Dorsolateral prefrontal cortex (tissue), 120 donors: ENCODE measurements at regions of chr1 and their contacts with region 1.

Region 1: DNA sequence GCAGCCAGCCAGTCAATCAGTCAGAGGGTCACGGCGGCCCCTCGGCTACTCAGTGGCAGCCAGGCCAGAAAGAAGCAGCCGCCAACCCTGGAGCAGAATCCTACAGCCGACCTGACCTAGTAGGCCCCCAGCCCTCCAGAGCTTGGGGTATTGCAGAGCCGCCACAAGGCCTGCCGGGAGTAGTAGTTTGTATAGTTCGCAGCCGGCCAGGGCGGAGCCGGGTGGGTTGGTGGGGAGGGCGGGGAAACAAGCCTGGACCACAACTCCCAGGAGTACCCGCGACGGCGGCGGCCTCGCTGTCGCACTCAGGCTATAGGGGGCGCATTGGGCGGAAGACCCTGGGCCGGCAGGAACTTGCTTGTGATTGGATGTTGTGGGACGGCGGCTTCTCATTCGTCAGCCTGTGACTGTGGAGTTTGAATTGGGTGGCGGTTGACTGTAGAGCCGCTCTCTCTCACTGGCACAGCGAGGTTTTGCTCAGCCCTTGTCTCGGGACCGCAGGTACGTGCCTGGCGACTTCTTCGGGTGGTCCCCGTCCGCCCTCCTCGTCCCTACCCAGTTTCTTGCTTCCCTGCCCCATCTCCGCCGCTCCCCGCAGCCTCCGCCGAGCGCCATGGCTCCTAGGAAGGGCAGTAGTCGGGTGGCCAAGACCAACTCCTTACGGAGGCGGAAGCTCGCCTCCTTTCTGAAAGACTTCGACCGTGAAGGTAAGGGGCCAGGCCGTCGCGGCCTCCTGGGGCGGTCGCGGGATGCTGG is at the start of gene CDCA8:
- DNase-seq: peak; percentile 94 to 99 (median 98)
- H3K4me3 ChIP-seq: peak within 1 kb of the TSS; percentile 60 to 100 (median 89)
- H3K27ac ChIP-seq: peak within 1 kb of the TSS in 49 of 59 donors; percentile 6 to 90 (median 67)
- H3K27me3 ChIP-seq: no peaks in the 10 kb centered on the region
- CTCF ChIP-seq: peak; percentile 72 to 93 (median 85)
- total RNA-seq, gene CDCA8: 0.30 to 1.9 (median 0.93) TPM

Region 2: DNA sequence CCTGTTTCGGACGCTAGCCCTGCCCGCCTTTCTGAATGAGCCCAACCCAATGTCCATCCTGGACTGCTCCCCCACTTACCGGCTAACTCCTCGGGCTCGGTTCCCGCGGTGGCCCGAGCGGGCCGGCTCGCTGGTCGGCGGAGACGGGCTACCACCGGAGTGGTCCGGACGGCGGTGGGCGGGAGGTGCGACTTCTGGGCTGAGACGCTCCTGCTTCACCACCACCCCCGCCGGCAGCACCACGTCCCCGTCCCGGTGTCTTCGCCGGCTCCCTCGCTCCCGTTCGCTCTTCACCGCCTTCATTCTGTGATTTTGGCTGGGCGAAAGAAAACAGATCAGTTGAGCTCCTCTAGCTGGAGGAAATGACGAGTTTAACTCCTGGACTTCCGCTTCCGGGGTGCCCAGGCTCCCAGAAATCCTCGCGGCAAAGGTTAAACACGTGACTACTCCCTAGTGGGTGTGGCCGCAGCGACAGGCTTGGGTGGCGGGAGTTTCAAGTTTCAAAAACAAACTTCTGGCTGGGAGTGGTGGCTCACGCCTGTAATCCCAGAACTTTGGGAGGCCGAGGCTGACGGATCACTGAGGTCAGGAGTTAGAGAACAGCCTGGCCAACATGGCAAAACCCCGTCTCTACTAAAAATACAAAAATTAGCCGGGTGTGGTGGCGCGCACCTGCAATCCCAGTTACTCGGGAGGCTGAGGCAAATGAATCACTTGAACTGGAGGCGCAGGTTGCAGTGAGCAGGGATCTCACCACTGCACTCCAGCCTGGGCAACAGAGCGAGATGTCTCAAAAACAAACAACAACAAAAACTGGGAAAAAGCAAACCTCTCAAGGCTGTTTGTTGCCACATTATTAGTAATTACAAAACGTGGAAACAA is 138.1 kb before region 1 on chr1 and contains the start of gene SNIP1:
- intact Hi-C with region 1: loop called (anchors 1 to 2 kb)
- DNase-seq: peak; percentile 91 to 99 (median 98)
- H3K4me3 ChIP-seq: peak within 1 kb of the TSS; percentile 70 to 100 (median 96)
- H3K27ac ChIP-seq: peak within 1 kb of the TSS in 52 of 59 donors; percentile 1 to 91 (median 76)
- H3K27me3 ChIP-seq: no peaks in the 10 kb centered on the region
- CTCF ChIP-seq: peak in 27 of 56 donors; percentile 14 to 57 (median 35)
- total RNA-seq, gene SNIP1: 8.4 to 24.4 (median 16.7) TPM

Region 3: DNA sequence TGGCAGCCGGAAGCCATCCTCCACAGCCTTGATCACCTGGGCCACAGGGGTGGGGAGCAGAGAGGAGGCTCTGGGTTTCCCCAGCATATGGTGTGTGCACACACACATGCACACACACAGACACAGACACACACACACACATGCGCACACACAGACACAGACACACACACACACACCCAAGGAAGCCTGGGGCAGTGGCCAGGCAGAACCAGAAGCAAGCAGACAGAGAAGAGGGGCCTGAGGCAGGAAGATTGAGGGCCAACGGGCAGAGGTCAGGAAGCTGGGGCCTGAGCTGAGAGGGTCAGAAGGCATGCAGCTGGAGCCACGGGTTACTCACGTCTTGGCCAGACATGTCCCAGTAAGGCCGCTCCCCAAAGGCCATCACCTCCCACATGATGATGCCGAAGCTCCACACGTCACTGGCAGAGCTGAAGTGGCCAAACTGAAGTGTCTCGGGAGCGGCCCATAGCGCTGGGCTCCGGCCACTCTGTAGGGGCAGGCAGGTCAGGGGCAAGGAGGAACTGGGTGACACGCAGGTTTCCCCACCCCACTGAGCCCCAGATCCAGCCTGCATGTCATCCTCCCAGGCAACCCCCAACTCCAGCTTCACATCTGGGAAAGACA is 27.4 kb after region 1 on chr1:
- intact Hi-C with region 1: loop called in 1 of 2 experiments (anchors 2 kb)
- DNase-seq: no peak
- H3K4me3 ChIP-seq: no peak overlapping the region
- H3K27ac ChIP-seq: no peak overlapping the region
- H3K27me3 ChIP-seq: no peaks in the 10 kb centered on the region
- CTCF ChIP-seq: no peak

Region 4: GRCh38 chr1:37795321-37796125 is 103.3 kb after region 1 on chr1:
- intact Hi-C with region 1: no loop called
- DNase-seq: peak in 3 of 10 donors; percentile 13 to 46 (median 24)
- H3K4me3 ChIP-seq: peak overlapping the region; percentile 39 to 79 (median 65)
- H3K27ac ChIP-seq: peak overlapping the region in 4 of 59 donors; percentile 14 to 57 (median 52)
- H3K27me3 ChIP-seq: no peaks in the 10 kb centered on the region
- CTCF ChIP-seq: no peak

Region 5: DNA sequence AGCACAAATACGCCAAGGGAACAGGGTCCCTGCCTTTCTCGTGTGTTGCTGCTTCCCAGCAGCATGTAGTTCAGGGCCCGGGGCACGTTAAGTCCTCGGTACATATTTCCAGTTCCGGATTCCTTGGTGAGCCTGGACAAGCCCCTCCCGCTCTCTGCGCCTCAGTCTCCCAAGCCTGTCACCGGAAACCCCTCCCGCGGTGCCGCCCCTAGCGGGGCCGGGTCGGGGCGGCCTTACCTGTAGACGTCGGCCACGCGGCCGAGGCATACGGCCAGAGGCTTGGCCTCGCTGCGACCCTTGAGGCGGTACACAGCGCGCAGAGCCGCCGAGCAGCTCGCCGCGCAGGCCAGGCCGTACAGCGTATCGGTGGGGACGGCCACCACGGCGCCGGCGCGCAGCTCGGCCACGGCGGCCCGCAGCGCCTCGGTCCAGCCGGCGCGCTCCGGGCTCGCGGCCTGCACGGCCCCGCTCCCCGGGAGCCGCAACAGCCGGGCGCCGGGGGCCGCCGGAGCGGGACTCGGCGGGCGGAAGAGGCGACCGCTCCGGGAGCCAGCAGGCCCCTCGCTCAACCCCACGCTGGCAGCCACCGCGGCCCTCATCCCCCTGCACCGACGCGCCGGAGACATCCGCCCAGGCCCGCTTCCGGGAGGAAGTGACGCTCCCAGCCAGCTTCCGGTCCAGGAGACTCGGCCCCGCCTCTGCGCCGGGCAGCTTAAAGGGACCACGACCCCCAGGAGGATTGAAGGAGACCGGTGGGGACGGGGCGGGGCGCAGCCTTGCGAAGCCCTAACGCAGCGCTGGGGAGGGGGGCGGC is 115.5 kb after region 1 on chr1 and contains the starts of genes C1orf122 and YRDC:
- intact Hi-C with region 1: loop called (anchors 2 kb)
- DNase-seq: peak; percentile 93 to 98 (median 96)
- H3K4me3 ChIP-seq: peak within 1 kb of the TSS; percentile 68 to 97 (median 90)
- H3K27ac ChIP-seq: peak within 1 kb of the TSS; percentile 61 to 100 (median 97)
- H3K27me3 ChIP-seq: no peaks in the 10 kb centered on the region
- CTCF ChIP-seq: peak in 4 of 56 donors; percentile 7 to 18 (median 16)
- total RNA-seq, gene C1orf122: 49.0 to 111 (median 68.1) TPM
- total RNA-seq, gene YRDC: 6.0 to 15.3 (median 10.2) TPM

Region 6: DNA sequence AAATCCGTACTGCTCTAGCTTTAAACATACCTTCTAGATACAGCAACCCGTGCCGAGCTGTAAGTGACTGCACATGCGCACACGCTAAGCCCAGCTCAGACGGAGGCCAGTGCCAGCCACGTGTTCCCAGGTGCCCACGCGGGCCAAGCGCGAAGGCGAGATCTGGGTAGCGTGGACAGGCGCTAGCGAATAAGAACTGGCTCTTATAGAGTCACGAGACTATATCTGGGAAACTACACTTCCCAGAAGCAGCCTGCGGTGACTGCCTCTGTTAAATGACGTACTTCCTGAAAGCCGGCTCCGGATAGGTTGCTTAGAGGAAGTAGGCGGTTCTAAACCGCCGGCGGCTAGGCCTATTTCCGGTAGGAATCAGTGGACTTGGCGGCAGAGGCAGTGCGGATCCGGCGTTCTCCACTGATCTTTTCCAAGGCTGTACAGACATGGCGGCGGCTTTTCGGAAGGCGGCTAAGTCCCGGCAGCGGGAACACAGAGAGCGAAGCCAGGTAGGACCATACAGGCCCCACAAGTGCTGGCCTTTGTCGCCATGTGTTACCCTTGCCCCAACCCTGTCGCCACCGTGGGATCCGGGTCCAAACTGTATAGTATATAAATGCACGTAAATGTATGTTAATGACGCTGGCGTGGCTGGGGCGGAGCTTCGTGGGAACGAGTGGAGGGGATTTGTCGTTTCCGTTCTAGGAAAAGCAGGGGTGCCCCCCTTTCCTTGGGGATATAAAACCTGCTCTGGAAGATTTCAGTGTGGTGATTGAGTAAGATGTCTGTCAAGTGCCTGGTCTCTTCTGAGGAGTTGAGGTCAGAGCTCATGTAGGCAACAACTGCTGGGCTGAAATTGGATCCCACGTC is 320.3 kb after region 1 on chr1 and contains the start of gene UTP11:
- intact Hi-C with region 1: loop called in 1 of 2 experiments (anchors 2 kb)
- DNase-seq: peak; percentile 79 to 97 (median 96)
- H3K4me3 ChIP-seq: peak within 1 kb of the TSS; percentile 56 to 99 (median 86)
- H3K27ac ChIP-seq: peak within 1 kb of the TSS; percentile 20 to 96 (median 84)
- H3K27me3 ChIP-seq: no peaks in the 10 kb centered on the region
- CTCF ChIP-seq: peak in 22 of 56 donors; percentile 3 to 56 (median 28)
- total RNA-seq, gene UTP11: 13.6 to 33.4 (median 24.4) TPM

Region 7: GRCh38 chr1:38037221-38037939 is 345.1 kb after region 1 on chr1:
- intact Hi-C with region 1: no loop called
- DNase-seq: no peak
- H3K4me3 ChIP-seq: no peak overlapping the region
- H3K27ac ChIP-seq: no peak overlapping the region
- H3K27me3 ChIP-seq: peaks cover 0 to 15% (median 2%) of the 10 kb centered on the region in 45 donors
- CTCF ChIP-seq: peak in 14 of 56 donors; percentile 12 to 32 (median 18)